CD8-positive, alpha-beta T cell (primary cell): ENCODE measurements at regions of chr11 and their contacts with region 1.

Region 1: DNA sequence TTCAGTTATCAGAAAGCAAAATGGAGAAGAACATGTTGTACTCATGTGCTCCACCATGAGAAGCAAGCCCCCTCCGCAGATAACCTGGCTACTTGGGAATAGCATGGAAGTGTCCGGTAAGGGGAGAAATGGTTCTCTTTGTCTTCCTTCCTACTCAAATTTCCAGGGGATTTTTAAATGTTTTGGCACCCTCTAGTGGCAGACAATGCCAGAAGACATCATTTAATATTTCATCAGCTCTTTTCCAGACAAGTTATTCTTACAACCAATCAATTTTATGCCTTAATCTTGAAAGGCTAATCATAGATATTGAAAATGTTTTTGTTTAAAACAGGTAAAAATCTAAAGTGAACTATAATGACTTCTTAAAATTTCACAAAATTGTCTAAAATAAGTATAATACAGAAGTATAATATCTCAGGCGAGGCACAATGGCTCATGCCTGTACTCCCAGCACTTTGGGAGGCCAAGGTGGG is 15.7 kb downstream of the CRTAM start:
- DNase-seq: peak in 5 of 9 experiments; percentile 41 to 85 (median 65)
- ATAC-seq: no peak
- H3K4me3 ChIP-seq: no peak overlapping the region
- H3K4me3 Mint-ChIP-seq: no peak overlapping the region
- H3K27ac ChIP-seq: no peak overlapping the region
- H3K27ac Mint-ChIP-seq: peak overlapping the region; percentile 93
- H3K4me1 ChIP-seq: peaks cover 57% of the 10 kb centered on the region
- H3K4me1 Mint-ChIP-seq: peaks cover 61% of the 10 kb centered on the region
- H3K27me3 ChIP-seq: no peaks in the 10 kb centered on the region
- H3K27me3 Mint-ChIP-seq: no peaks in the 10 kb centered on the region
- CTCF ChIP-seq: peak; percentile 78

Region 2: GRCh38 chr11:122578168-122578825 is 275.7 kb before region 1 on chr11:
- CTCF ChIA-PET with region 1: no interaction called
- POLR2A ChIA-PET with region 1: no interaction called
- intact Hi-C with region 1: loop called in 1 of 2 experiments (anchors 1 kb)
- DNase-seq: no peak
- ATAC-seq: no peak
- H3K4me3 ChIP-seq: no peak overlapping the region
- H3K4me3 Mint-ChIP-seq: no peak overlapping the region
- H3K27ac ChIP-seq: no peak overlapping the region
- H3K27ac Mint-ChIP-seq: no peak overlapping the region
- H3K4me1 ChIP-seq: peaks cover 4% of the 10 kb centered on the region
- H3K4me1 Mint-ChIP-seq: peaks cover 7% of the 10 kb centered on the region
- H3K27me3 ChIP-seq: no peaks in the 10 kb centered on the region
- H3K27me3 Mint-ChIP-seq: no peaks in the 10 kb centered on the region
- CTCF ChIP-seq: no peak

Region 3: GRCh38 chr11:122743949-122744348 is 110.1 kb before region 1 on chr11:
- CTCF ChIA-PET with region 1: interaction called, 5 read pairs
- POLR2A ChIA-PET with region 1: no interaction called
- intact Hi-C with region 1: loop called in 1 of 2 experiments (anchors 2 kb)
- DNase-seq: peak; percentile 19 to 86 (median 73)
- ATAC-seq: peak; percentile 46
- H3K4me3 ChIP-seq: peak overlapping the region; percentile 24 to 40
- H3K4me3 Mint-ChIP-seq: no peak overlapping the region
- H3K27ac ChIP-seq: peak overlapping the region; percentile 46 to 70
- H3K27ac Mint-ChIP-seq: no peak overlapping the region
- H3K4me1 ChIP-seq: peaks cover 71% of the 10 kb centered on the region
- H3K4me1 Mint-ChIP-seq: peaks cover 15% of the 10 kb centered on the region
- H3K27me3 ChIP-seq: no peaks in the 10 kb centered on the region
- H3K27me3 Mint-ChIP-seq: no peaks in the 10 kb centered on the region
- CTCF ChIP-seq: no peak

Region 4: GRCh38 chr11:122796128-122796717 is 57.8 kb before region 1 on chr11:
- CTCF ChIA-PET with region 1: interaction called, 472 read pairs
- POLR2A ChIA-PET with region 1: interaction called, 45 read pairs
- intact Hi-C with region 1: loop called (anchors 1 kb)
- DNase-seq: peak; percentile 55 to 85 (median 75)
- ATAC-seq: peak; percentile 100
- H3K4me3 ChIP-seq: no peak overlapping the region
- H3K4me3 Mint-ChIP-seq: no peak overlapping the region
- H3K27ac ChIP-seq: no peak overlapping the region
- H3K27ac Mint-ChIP-seq: no peak overlapping the region
- H3K4me1 ChIP-seq: no peaks in the 10 kb centered on the region
- H3K4me1 Mint-ChIP-seq: peaks cover 4% of the 10 kb centered on the region
- H3K27me3 ChIP-seq: no peaks in the 10 kb centered on the region
- H3K27me3 Mint-ChIP-seq: no peaks in the 10 kb centered on the region
- CTCF ChIP-seq: peak; percentile 96

Region 5: DNA sequence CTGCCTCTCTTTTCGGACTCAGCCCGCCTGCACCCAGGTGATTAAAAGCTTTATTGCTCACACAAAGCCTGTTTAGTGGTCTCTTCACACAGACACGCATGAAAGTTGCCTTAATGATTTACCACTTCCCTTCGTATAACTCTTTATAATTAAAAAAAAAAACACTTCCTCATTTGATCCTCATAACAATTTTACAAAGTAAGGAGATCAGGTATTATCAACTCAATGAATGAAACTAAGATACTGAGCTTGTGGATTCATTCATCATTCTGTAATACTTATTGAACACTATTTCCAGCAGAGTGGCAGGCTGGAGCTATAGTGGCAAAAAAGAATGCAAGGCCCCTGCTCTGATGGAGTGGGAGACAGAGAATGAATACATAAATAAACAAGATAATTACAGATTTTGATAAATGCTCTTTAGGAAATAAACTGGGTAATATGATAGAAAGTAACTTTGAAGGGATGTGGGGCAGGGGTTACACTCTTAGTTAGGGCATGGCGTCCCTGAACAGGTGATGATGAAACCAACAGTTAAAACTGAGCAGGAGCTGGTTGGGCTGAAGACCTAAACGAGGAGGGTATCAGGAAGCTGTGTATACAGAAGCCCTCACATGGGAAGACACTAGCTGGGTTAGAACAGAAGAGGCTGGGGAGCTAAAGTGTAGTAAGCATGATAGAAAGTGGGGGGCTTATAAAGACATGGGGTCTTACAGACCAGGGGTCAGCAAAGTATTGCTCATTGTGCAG is 21.1 kb before region 1 on chr11:
- CTCF ChIA-PET with region 1: interaction called, 127 read pairs
- POLR2A ChIA-PET with region 1: interaction called, 69 read pairs
- intact Hi-C with region 1: loop called (anchors 1 kb)
- DNase-seq: peak in 1 of 9 experiments; percentile 44
- ATAC-seq: peak; percentile 46
- H3K4me3 ChIP-seq: no peak overlapping the region
- H3K4me3 Mint-ChIP-seq: peak overlapping the region; percentile 12
- H3K27ac ChIP-seq: peak overlapping the region; percentile 7 to 42
- H3K27ac Mint-ChIP-seq: peak overlapping the region; percentile 70
- H3K4me1 ChIP-seq: peaks cover 15% of the 10 kb centered on the region
- H3K4me1 Mint-ChIP-seq: peaks cover 43% of the 10 kb centered on the region
- H3K27me3 ChIP-seq: no peaks in the 10 kb centered on the region
- H3K27me3 Mint-ChIP-seq: no peaks in the 10 kb centered on the region
- CTCF ChIP-seq: no peak

Region 6: DNA sequence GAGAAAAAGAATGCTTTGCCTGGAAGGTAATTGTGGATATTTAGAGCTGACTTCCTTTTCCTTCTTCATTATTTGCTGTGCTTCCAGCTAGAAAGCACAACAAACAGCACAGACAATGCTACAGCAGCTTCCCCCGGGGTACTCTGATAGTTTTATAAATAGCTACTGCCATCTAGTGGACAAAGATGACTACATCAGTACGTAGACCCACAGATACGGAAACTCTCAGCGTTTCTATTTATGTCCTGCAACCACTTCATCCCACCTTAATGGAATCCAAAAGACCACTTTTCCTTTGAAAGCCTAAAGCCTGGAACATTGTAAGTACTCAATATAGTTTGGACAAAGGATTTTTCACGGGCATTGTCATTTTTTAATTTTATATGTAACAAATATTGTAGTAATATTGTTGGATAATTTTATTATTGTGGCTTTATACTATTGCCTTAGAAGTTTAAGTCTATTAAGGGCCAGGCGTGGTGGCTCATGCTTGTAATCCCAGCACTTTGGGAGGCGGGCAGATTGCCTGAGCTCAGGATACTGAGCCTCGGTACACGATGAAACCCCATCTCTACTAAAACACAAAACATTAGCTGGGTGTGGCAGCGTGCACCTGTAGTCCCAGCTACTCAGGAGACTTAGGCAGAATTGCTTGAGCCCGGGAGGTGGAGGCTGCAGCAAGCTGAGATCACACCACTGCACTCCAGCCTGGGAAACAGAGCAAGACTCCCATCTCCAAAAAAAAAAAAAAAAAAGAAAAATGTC is 200.5 kb after region 1 on chr11:
- CTCF ChIA-PET with region 1: interaction called, 14 read pairs
- POLR2A ChIA-PET with region 1: interaction called, 4 read pairs
- intact Hi-C with region 1: loop called in 1 of 2 experiments (anchors 5 kb)
- DNase-seq: peak in 4 of 9 experiments; percentile 28 to 84 (median 56)
- ATAC-seq: peak; percentile 85
- H3K4me3 ChIP-seq: no peak overlapping the region
- H3K4me3 Mint-ChIP-seq: peak overlapping the region; percentile 67
- H3K27ac ChIP-seq: peak overlapping the region in 1 of 2 experiments; percentile 51
- H3K27ac Mint-ChIP-seq: peak overlapping the region; percentile 97
- H3K4me1 ChIP-seq: peaks cover 55% of the 10 kb centered on the region
- H3K4me1 Mint-ChIP-seq: peaks cover 57% of the 10 kb centered on the region
- H3K27me3 ChIP-seq: no peaks in the 10 kb centered on the region
- H3K27me3 Mint-ChIP-seq: no peaks in the 10 kb centered on the region
- CTCF ChIP-seq: peak; percentile 72